Activated CD4-positive, alpha-beta T cell treated with anti-CD3 and anti-CD28 coated beads, Interleukin-2, amount 10 ng/mL, durations not matched to agents 24 days and 14 days (primary cell): ENCODE measurements at regions of chr1 and their contacts with region 1.

Region 1: GRCh38 chr1:16206547-16207317 is 5.7 kb downstream of the ARHGEF19 start:
- DNase-seq: peak; percentile 98
- H3K4me3 Mint-ChIP-seq: peak overlapping the region; percentile 89
- H3K27ac Mint-ChIP-seq: peak overlapping the region; percentile 97
- H3K4me1 Mint-ChIP-seq: peaks cover 6% of the 10 kb centered on the region
- H3K27me3 Mint-ChIP-seq: peaks cover 3% of the 10 kb centered on the region

Region 2: GRCh38 chr1:16217061-16217785 is 10.5 kb after region 1 on chr1:
- intact Hi-C with region 1: loop called (anchors 1 kb)
- DNase-seq: peak; percentile 98
- H3K4me3 Mint-ChIP-seq: peak overlapping the region; percentile 88
- H3K27ac Mint-ChIP-seq: peak overlapping the region; percentile 39
- H3K4me1 Mint-ChIP-seq: peaks cover 24% of the 10 kb centered on the region
- H3K27me3 Mint-ChIP-seq: peaks cover 14% of the 10 kb centered on the region

Region 3: DNA sequence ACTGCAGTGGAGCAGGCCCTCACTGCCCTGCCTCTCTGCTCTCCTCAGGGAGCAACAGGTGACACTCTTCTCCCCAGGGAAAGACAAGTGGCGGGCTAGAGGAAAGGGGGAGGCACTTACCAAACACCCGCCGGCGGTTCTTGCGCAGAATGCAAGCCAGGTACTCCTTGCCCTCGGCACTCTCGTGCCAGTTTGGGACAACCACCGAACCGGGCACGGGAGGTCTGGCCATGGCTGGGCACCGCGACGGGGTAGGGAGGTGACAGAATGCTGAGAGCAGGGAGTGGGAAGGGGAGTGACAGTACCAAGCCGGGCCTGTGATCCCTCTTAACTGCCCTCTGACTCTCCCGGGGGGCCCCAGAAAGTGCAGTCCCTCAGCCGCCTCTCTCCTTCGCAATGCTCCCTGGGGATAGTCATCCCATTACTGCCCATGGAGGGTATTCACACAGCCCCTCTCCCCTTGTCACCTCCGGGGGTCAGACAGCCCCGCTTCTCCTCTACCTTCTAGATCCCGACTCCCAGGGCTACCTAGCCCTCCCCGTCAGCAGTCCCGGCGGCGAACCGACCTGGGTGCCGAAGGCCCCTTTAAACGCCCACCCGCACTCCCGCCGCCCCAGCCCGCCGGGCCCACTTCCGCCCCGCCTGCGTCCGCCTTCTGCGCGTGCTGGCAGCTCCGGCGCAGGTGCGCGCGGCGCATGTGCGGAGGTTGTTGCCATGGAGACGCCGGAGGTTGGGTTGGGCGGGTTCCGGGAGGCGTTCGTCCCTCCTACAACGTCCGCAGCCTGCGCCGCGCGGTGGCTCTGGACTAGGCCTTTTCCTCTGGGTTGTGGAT is 30.0 kb after region 1 on chr1 and contains the start of gene CPLANE2:
- intact Hi-C with region 1: loop called (anchors 1 kb)
- DNase-seq: peak; percentile 99
- H3K4me3 Mint-ChIP-seq: peak within 1 kb of the TSS; percentile 91
- H3K27ac Mint-ChIP-seq: peak within 1 kb of the TSS; percentile 92
- H3K4me1 Mint-ChIP-seq: peaks cover 20% of the 10 kb centered on the region
- H3K27me3 Mint-ChIP-seq: no peaks in the 10 kb centered on the region
- total RNA-seq, gene CPLANE2: 4.8 and 6.1 TPM in 2 replicates

Region 4: DNA sequence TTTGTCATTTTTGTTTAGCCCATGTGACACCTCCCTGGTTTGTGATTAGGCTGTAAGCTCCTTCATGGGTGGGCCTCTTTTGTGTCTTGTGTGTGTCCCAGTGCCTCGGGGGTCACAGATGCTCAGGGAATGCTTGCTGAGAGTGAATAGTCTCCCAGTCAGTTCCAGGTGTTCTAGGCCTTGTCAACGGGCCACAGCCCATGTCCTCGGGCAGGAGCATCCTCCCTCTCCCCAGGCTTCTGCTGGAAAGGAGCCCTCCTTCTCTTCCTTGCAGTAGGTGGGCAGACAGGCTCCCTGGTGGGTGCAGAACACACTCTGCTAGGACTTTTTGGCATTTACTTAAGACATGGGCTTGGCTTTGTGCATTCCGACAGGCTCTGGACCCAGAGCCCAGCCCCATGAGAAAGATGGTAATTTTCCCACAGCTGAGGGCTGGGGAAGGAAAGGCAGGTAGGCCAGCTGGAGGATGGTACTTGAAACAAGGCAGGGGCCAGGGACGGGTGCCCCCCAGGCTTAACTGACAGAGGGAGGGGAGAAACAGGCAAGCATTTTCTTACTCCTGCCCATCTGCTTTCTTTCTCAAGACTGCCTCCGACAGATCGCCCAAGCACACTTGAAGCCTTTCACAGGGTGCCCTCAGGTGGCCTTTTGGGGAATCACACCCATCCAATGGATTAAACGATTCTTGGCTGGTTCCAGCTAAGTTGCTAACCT is 37.4 kb after region 1 on chr1:
- intact Hi-C with region 1: loop called (anchors 1 kb)
- DNase-seq: peak; percentile 93
- H3K4me3 Mint-ChIP-seq: no peak overlapping the region
- H3K27ac Mint-ChIP-seq: no peak overlapping the region
- H3K4me1 Mint-ChIP-seq: peaks cover 8% of the 10 kb centered on the region
- H3K27me3 Mint-ChIP-seq: no peaks in the 10 kb centered on the region

Region 5: DNA sequence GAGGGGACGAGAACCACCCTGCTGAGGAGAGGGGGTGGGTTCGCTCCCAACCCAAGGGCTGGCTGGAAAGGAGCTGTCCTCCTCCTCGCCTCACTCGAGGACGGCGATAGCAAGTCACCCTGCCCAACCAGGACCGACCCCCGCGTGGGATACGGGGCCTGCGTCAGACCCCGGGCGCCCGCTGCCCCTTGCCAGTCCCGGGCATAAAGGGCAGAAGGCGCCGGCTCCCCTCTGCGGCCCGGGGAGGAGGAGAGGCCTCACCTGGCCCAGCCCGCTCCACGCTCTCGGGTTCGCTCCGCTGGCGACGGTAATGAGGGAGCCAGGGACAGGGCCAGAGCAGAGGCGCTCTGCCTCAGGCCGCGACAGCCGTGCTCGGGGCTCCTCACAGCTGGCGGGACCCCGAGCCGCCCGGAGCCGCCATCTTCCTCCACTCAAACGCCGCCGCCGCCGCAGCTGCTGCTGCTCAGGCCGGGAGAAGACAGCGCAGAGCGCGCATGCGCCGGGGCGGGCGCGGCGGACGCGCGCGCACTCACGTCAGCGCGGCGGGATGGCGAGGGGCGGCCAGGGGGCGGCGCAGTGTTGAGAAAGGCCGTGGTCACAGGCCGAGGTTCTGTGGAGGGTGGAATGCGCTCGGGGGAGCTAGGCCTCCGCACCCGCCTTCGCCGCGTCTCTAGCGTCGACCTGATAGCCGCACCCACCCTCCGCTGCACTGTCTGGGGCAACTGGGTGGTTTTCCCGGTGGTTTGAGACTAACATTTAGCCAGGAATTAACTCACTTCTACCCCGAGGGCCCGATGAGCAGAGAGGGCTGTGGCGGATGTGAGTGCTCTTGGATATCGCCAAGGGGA is 145.5 kb after region 1 on chr1 and contains the start of gene FBXO42:
- intact Hi-C with region 1: loop called (anchors 2 kb)
- DNase-seq: peak; percentile 99
- H3K4me3 Mint-ChIP-seq: peak within 1 kb of the TSS; percentile 90
- H3K27ac Mint-ChIP-seq: peak within 1 kb of the TSS; percentile 93
- H3K4me1 Mint-ChIP-seq: peaks cover 25% of the 10 kb centered on the region
- H3K27me3 Mint-ChIP-seq: no peaks in the 10 kb centered on the region
- total RNA-seq, gene FBXO42: 20.4 and 20.8 TPM in 2 replicates